Naive thymus-derived CD4-positive, alpha-beta T cell (primary cell): ENCODE measurements at regions of chr19 and their contacts with region 1.

Region 1: GRCh38 chr19:892243-893050 is 540 bp downstream of the MED16 start:
- DNase-seq: no peak
- ATAC-seq: peak; percentile 65
- H3K4me3 ChIP-seq: peak overlapping the region; percentile 72
- H3K4me3 Mint-ChIP-seq: peak overlapping the region; percentile 77 to 96 (median 92)
- H3K27ac ChIP-seq: peak overlapping the region; percentile 97
- H3K27ac Mint-ChIP-seq: peak overlapping the region; percentile 65 to 100 (median 99)
- H3K4me1 ChIP-seq: peaks cover 3 to 5% of the 10 kb centered on the region in 2 donors
- H3K4me1 Mint-ChIP-seq: peaks cover 4 to 42% (median 30%) of the 10 kb centered on the region in 7 donors
- H3K27me3 ChIP-seq: no peaks in the 10 kb centered on the region
- H3K27me3 Mint-ChIP-seq: peaks cover 0 to 4% (median 0%) of the 10 kb centered on the region in 5 donors

Region 2: GRCh38 chr19:872266-872951 is 20.0 kb before region 1 on chr19:
- CTCF ChIA-PET with region 1: no interaction called
- POLR2A ChIA-PET with region 1: interaction called, 7 read pairs
- intact Hi-C with region 1: loop called (anchors 1 to 2 kb)
- DNase-seq: peak; percentile 63 to 91 (median 80)
- ATAC-seq: peak; percentile 86
- H3K4me3 ChIP-seq: peak overlapping the region; percentile 37
- H3K4me3 Mint-ChIP-seq: peak overlapping the region; percentile 72 to 86 (median 82)
- H3K27ac ChIP-seq: peak overlapping the region; percentile 54
- H3K27ac Mint-ChIP-seq: peak overlapping the region; percentile 86 to 95 (median 92)
- H3K4me1 ChIP-seq: peaks cover 8 to 14% of the 10 kb centered on the region in 2 donors
- H3K4me1 Mint-ChIP-seq: peaks cover 0 to 27% (median 12%) of the 10 kb centered on the region in 7 donors
- H3K27me3 ChIP-seq: no peaks in the 10 kb centered on the region
- H3K27me3 Mint-ChIP-seq: peaks cover 0 to 2% (median 0%) of the 10 kb centered on the region in 5 donors

Region 3: GRCh38 chr19:907183-907853 is 14.9 kb after region 1 on chr19:
- CTCF ChIA-PET with region 1: interaction called, 7 read pairs
- POLR2A ChIA-PET with region 1: interaction called, 196 read pairs
- intact Hi-C with region 1: loop called (anchors 1 kb)
- DNase-seq: peak in 2 of 9 donors; percentile 11 to 50
- ATAC-seq: peak; percentile 13
- H3K4me3 ChIP-seq: no peak overlapping the region
- H3K4me3 Mint-ChIP-seq: peak overlapping the region; percentile 26 to 91 (median 79)
- H3K27ac ChIP-seq: peak overlapping the region; percentile 95
- H3K27ac Mint-ChIP-seq: peak overlapping the region; percentile 100
- H3K4me1 ChIP-seq: peaks cover 34 to 42% of the 10 kb centered on the region in 2 donors
- H3K4me1 Mint-ChIP-seq: peaks cover 27 to 81% (median 52%) of the 10 kb centered on the region in 7 donors
- H3K27me3 ChIP-seq: no peaks in the 10 kb centered on the region
- H3K27me3 Mint-ChIP-seq: no peaks in the 10 kb centered on the region

Region 4: DNA sequence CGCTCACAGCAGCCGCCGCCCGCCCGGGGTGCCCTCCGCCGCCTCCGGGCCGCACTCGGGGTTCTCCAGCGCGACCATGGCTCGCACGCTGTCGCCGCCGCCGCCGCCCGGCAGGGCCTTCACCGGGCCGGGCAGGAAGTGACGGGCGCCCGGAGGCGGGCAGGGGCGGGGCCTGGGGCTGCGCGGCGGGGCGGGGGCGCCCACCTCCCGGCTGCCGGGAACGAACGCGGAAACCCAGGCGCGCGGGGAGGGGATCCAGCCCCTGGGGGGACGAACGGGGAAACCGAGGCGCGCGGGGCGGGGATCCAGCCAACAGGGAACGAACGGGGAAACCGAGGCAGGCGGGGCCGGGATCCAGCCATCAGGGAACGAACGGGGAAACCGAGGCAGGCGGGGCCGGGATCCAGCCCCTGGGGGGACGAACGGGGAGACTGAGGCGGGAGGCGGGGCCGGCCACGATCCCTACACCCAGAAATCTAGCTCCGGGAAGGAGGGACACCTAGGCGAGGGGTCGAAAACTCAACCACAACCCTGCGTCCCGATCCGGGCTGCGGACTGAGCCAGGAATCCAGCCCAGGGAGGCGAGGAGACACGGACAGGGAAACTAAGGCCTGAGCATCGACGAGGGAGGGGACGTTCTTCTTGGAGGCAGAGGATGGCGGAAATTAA is 20.8 kb after region 1 on chr19 and contains the start of gene R3HDM4:
- CTCF ChIA-PET with region 1: interaction called, 5 read pairs
- POLR2A ChIA-PET with region 1: interaction called, 196 read pairs
- intact Hi-C with region 1: loop called (anchors 1 kb)
- DNase-seq: peak; percentile 75 to 92 (median 83)
- ATAC-seq: peak; percentile 75
- H3K4me3 ChIP-seq: peak within 1 kb of the TSS; percentile 93
- H3K4me3 Mint-ChIP-seq: peak within 1 kb of the TSS; percentile 72 to 92 (median 88)
- H3K27ac ChIP-seq: peak within 1 kb of the TSS; percentile 100
- H3K27ac Mint-ChIP-seq: peak within 1 kb of the TSS; percentile 83 to 97 (median 95)
- H3K4me1 ChIP-seq: peaks cover 25 to 27% of the 10 kb centered on the region in 2 donors
- H3K4me1 Mint-ChIP-seq: peaks cover 19 to 54% (median 35%) of the 10 kb centered on the region in 7 donors
- H3K27me3 ChIP-seq: no peaks in the 10 kb centered on the region
- H3K27me3 Mint-ChIP-seq: peaks cover 0 to 2% (median 0%) of the 10 kb centered on the region in 5 donors
- total RNA-seq, gene R3HDM4: 123 to 219 (median 184) TPM

Region 5: DNA sequence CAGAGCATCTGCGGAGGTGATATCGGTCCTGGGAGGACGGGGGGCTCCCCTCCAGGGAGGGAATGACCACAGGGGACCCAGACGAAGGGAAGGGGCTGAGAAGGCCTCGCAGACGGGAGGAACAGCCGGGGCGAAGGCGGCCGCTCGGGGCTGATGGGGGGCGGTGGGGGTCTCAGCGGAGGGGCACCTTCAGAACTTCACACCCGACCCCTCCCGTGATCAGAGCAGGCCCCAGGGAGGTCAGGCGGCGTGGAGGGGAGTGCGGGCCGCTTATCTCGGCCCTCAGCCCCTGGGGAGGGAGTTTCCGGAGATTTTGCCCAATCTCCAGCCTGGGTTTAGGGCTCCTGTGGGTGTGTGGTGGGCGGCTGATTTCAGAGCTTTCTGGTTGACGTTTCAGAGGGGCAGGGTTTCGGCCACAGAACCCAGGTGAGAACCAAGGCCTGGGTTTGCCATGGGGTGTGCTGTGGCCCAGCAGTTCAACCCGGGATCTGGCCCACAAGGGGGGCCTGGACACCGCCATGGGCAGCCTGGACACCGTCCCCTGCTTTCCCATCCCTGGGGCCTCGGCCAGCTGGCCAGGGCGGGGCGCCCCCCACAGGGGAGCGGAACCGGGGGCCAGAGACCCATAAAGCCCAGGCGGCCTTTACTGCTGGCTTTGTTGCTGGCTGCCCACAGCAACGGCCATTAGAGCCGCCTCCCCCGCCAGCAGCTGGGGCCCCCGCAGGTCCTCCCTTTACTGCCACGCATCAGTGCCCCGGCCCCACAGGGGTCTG is 62.4 kb after region 1 on chr19:
- CTCF ChIA-PET with region 1: no interaction called
- POLR2A ChIA-PET with region 1: no interaction called
- intact Hi-C with region 1: no loop called
- DNase-seq: no peak
- ATAC-seq: no peak
- H3K4me3 ChIP-seq: no peak overlapping the region
- H3K4me3 Mint-ChIP-seq: no peak overlapping the region
- H3K27ac ChIP-seq: no peak overlapping the region
- H3K27ac Mint-ChIP-seq: no peak overlapping the region
- H3K4me1 ChIP-seq: peaks cover 6 to 11% of the 10 kb centered on the region in 2 donors
- H3K4me1 Mint-ChIP-seq: peaks cover 0 to 13% (median 3%) of the 10 kb centered on the region in 7 donors
- H3K27me3 ChIP-seq: no peaks in the 10 kb centered on the region
- H3K27me3 Mint-ChIP-seq: no peaks in the 10 kb centered on the region

Region 6: DNA sequence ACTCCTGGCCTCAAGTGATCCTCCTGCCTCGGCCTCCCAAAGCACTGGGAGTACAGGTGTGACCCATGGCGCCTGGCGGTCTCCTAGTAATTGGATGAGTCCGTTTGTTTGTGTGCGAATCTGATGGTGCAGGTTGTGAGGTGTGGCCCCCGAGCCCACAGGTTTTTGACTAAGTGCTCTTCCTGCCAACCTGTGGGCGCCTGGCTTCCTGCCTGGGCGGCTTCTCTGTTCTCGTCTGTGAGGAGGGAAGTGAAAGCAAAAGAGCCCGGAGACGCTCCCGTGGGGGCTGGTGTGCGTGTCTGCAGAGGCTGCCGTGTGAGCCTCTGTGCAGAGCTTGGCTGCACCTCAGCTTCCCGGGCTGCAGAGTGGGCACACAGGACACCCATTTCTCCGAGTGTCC is 184.5 kb after region 1 on chr19:
- CTCF ChIA-PET with region 1: no interaction called
- POLR2A ChIA-PET with region 1: no interaction called
- intact Hi-C with region 1: no loop called
- DNase-seq: peak; percentile 69 to 97 (median 96)
- ATAC-seq: peak; percentile 81
- H3K4me3 ChIP-seq: peak overlapping the region; percentile 87
- H3K4me3 Mint-ChIP-seq: peak overlapping the region; percentile 82 to 97 (median 91)
- H3K27ac ChIP-seq: peak overlapping the region; percentile 92
- H3K27ac Mint-ChIP-seq: peak overlapping the region; percentile 91 to 100 (median 99)
- H3K4me1 ChIP-seq: peaks cover 75 to 80% of the 10 kb centered on the region in 2 donors
- H3K4me1 Mint-ChIP-seq: peaks cover 26 to 64% (median 51%) of the 10 kb centered on the region in 7 donors
- H3K27me3 ChIP-seq: no peaks in the 10 kb centered on the region
- H3K27me3 Mint-ChIP-seq: no peaks in the 10 kb centered on the region